ENCODE measurements at regions of chr6 and their contacts with region 1.

Region 1: GRCh38 chr6:25223490-25223991 is 55.6 kb upstream of the CARMIL1 start:
- DNase-seq: peak; percentile 82
- ATAC-seq: peak; percentile 77
- H3K4me3 ChIP-seq: peak overlapping the region; percentile 49
- H3K27ac ChIP-seq: no peak overlapping the region
- H3K4me1 ChIP-seq: no peaks in the 10 kb centered on the region
- H3K27me3 ChIP-seq: no peaks in the 10 kb centered on the region
- CTCF ChIP-seq: peak; percentile 97

Region 2: GRCh38 chr6:25138237-25139125 is 85.1 kb before region 1 on chr6:
- CTCF ChIA-PET with region 1: no interaction called
- POLR2A ChIA-PET with region 1: no interaction called
- intact Hi-C with region 1: loop called (anchors 2 kb)
- DNase-seq: peak; percentile 54
- ATAC-seq: peak; percentile 98
- H3K4me3 ChIP-seq: peak overlapping the region; percentile 69
- H3K27ac ChIP-seq: no peak overlapping the region
- H3K4me1 ChIP-seq: no peaks in the 10 kb centered on the region; the same call in 1 of the 2 replicates
- H3K27me3 ChIP-seq: no peaks in the 10 kb centered on the region
- CTCF ChIP-seq: no peak

Region 3: DNA sequence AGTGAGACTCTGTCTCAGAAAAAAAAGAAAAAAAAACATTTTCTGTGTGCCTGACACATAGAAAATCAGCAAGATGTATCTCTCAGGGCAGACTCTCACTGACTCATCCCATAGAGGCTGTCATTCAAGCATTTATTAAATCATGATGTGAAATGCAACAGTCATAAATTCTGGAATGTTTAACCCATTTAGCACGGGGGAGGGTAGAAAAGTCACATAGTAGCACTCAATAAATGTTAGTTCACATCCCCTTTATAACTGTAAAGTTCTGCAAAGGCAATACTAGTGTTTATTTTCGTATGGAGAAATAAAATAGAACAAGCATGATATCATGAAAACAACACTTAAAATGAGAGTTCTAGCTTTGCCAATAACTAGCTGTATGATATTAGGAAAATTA is 40.1 kb after region 1 on chr6:
- CTCF ChIA-PET with region 1: interaction called, 15 read pairs
- POLR2A ChIA-PET with region 1: no interaction called
- intact Hi-C with region 1: loop called (anchors 1 kb)
- DNase-seq: peak; percentile 83
- ATAC-seq: peak; percentile 89
- H3K4me3 ChIP-seq: no peak overlapping the region
- H3K27ac ChIP-seq: 0 out of 2 replicates have a peak overlapping the region, but pooled peaks have one; percentile 1
- H3K4me1 ChIP-seq: peaks cover 12% of the 10 kb centered on the region
- H3K27me3 ChIP-seq: no peaks in the 10 kb centered on the region
- CTCF ChIP-seq: no peak

Region 4: GRCh38 chr6:25359191-25359861 is 135.8 kb after region 1 on chr6:
- CTCF ChIA-PET with region 1: no interaction called
- POLR2A ChIA-PET with region 1: no interaction called
- intact Hi-C with region 1: no loop called
- DNase-seq: peak; percentile 70
- ATAC-seq: peak; percentile 79
- H3K4me3 ChIP-seq: peak overlapping the region; percentile 16; the same call in 1 of the 2 replicates
- H3K27ac ChIP-seq: peak overlapping the region; percentile 68
- H3K4me1 ChIP-seq: peaks cover 23% of the 10 kb centered on the region
- H3K27me3 ChIP-seq: no peaks in the 10 kb centered on the region
- CTCF ChIP-seq: no peak

Region 5: GRCh38 chr6:25472306-25472705 is 248.8 kb after region 1 on chr6:
- CTCF ChIA-PET with region 1: no interaction called
- POLR2A ChIA-PET with region 1: no interaction called
- intact Hi-C with region 1: no loop called
- DNase-seq: peak; percentile 48
- ATAC-seq: peak; percentile 46; the same call in 1 of the 2 replicates
- H3K4me3 ChIP-seq: no peak overlapping the region
- H3K27ac ChIP-seq: no peak overlapping the region
- H3K4me1 ChIP-seq: peaks cover 21% of the 10 kb centered on the region
- H3K27me3 ChIP-seq: no peaks in the 10 kb centered on the region
- CTCF ChIP-seq: peak; percentile 30; the same call in 1 of the 2 replicates

Region 6: DNA sequence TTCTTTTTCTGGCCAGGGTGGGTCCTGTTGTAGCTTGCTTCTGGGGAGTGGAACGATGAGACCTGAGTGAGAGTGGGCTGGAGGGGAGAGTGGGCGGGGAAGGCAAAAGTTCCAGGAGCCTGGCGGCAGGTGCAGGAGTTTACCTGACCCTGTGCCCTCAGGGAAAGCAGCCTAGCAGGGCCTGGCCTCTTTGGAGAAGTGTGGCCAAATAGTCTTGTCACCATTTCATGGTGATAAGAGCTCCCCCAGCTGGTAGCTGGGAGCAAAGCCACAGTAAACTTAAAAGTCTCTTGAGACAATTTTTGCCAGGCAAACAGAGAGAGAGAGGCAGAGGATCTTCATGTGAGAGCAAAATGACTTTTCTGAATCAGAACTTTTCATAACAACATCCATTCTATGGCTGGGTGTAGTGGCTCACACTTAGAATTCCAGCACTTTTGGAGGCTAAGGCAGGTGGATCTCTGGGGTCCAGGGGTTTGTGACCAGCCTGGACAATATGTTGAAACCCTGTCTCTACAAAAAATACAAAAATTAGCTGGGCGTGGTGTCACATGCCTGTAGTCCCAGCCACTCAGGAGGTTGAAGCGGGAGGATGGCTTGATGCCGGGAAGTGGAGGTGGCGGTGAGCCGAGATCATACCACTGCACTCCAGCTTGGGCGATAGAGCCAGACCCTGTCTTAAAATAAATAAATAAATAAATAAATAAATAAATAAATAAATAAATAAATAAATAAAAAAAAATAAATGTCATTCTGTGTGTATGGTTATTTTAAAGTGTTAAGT is 266.7 kb after region 1 on chr6:
- CTCF ChIA-PET with region 1: interaction called, 10 read pairs
- POLR2A ChIA-PET with region 1: interaction called, 4 read pairs
- intact Hi-C with region 1: loop called (anchors 1 kb)
- DNase-seq: peak; percentile 92
- ATAC-seq: peak; percentile 97
- H3K4me3 ChIP-seq: no peak overlapping the region
- H3K27ac ChIP-seq: no peak overlapping the region
- H3K4me1 ChIP-seq: peaks cover 4% of the 10 kb centered on the region; the same call in 1 of the 2 replicates
- H3K27me3 ChIP-seq: no peaks in the 10 kb centered on the region
- CTCF ChIP-seq: peak; percentile 90

Region 7: GRCh38 chr6:25601800-25602673 is 378.5 kb after region 1 on chr6:
- CTCF ChIA-PET with region 1: interaction called, 3 read pairs
- POLR2A ChIA-PET with region 1: no interaction called
- intact Hi-C with region 1: loop called (anchors 1 kb)
- DNase-seq: peak; percentile 70
- ATAC-seq: peak; percentile 81
- H3K4me3 ChIP-seq: no peak overlapping the region
- H3K27ac ChIP-seq: no peak overlapping the region
- H3K4me1 ChIP-seq: peaks cover 7% of the 10 kb centered on the region; the same call in 1 of the 2 replicates
- H3K27me3 ChIP-seq: no peaks in the 10 kb centered on the region
- CTCF ChIP-seq: peak; percentile 87